Activated CD8-positive, alpha-beta memory T cell treated with anti-CD3 and anti-CD28 coated beads, Interleukin-2, amount 10 ng/mL, durations not matched to agents 7 days and 5 days (primary cell): ENCODE measurements at regions of chr11 and their contacts with region 1.

Region 1: DNA sequence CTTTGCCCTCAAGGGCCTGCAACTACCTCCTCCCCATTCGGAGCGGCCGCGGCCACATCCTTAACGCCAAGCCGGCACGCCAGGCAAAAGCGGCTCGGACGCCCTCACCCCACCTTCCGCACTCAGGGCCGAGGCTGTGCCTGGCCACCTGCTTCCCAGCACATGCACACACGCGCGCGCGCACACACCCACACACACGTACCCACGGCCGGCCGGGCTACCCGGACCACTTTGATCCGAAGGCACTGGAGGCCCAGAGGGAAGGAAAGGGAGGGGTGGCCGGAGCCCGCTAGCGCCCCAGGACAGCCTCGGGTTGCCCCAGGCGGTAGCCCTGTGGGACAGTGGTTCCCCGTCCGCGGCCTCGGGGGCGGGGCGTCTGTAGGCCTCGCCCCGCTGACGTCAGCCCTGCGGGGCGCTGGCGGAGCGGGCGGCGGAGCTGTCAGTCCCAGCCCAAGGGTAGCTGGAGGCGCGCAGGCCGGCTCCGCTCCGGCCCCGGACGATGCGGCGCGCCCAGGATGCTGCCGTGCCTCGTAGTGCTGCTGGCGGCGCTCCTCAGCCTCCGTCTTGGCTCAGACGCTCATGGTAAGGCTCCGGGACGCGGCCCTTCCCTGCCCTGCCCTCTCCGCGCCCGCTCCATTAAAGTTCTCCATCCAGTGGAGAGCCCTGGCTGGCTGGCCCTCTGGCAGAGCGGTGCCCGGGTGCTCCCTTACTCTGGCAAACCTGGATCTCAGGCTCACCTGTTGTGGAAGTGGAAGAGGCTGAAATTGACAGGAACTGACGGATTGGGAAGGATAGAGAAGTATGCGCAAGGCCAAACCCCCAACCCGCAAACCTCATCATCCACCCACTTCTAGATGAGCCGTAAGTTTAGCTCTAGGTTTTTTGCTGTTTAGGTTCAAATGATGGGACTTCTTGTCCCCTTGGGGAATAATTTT is at the start of gene IL10RA:
- DNase-seq: peak; percentile 90
- ATAC-seq: peak; percentile 91
- H3K4me3 Mint-ChIP-seq: peak within 1 kb of the TSS; percentile 96
- H3K27ac Mint-ChIP-seq: peak within 1 kb of the TSS; percentile 97
- H3K4me1 Mint-ChIP-seq: peaks cover 70% of the 10 kb centered on the region
- H3K27me3 Mint-ChIP-seq: no peaks in the 10 kb centered on the region
- total RNA-seq, gene IL10RA: 247 to 260 TPM

Region 2: GRCh38 chr11:117876341-117877119 is 109.7 kb before region 1 on chr11 and contains the start of gene FXYD6:
- CTCF ChIA-PET with region 1: no interaction called
- DNase-seq: no peak
- ATAC-seq: no peak
- H3K4me3 Mint-ChIP-seq: peak within 1 kb of the TSS; percentile 68
- H3K27ac Mint-ChIP-seq: no peak within 1 kb of the TSS
- H3K4me1 Mint-ChIP-seq: peaks cover 45% of the 10 kb centered on the region
- H3K27me3 Mint-ChIP-seq: peaks cover 80% of the 10 kb centered on the region
- total RNA-seq, gene FXYD6: 0.12 to 0.20 TPM

Region 3: GRCh38 chr11:117970400-117971024 is 15.7 kb before region 1 on chr11:
- CTCF ChIA-PET with region 1: interaction called, 32 read pairs
- DNase-seq: peak; percentile 70
- ATAC-seq: peak; percentile 67
- H3K4me3 Mint-ChIP-seq: peak overlapping the region; percentile 7
- H3K27ac Mint-ChIP-seq: peak overlapping the region; percentile 75
- H3K4me1 Mint-ChIP-seq: peaks cover 62% of the 10 kb centered on the region
- H3K27me3 Mint-ChIP-seq: no peaks in the 10 kb centered on the region

Region 4: GRCh38 chr11:118002541-118003423 is 16.6 kb after region 1 on chr11:
- CTCF ChIA-PET with region 1: interaction called, 51 read pairs
- DNase-seq: peak; percentile 85
- ATAC-seq: peak; percentile 53
- H3K4me3 Mint-ChIP-seq: peak overlapping the region; percentile 54
- H3K27ac Mint-ChIP-seq: peak overlapping the region; percentile 98
- H3K4me1 Mint-ChIP-seq: peaks cover 100% of the 10 kb centered on the region
- H3K27me3 Mint-ChIP-seq: no peaks in the 10 kb centered on the region